ENCODE measurements at regions of chr3 and their contacts with region 1.

Region 1: GRCh38 chr3:120558771-120559241 is 37.3 kb upstream of the NDUFB4 start:
- DNase-seq: peak; percentile 88 to 94 (median 88)
- ATAC-seq: peak; percentile 37 to 60 (median 44)
- H3K4me3 ChIP-seq: peak overlapping the region; percentile 9 to 62 (median 52)
- H3K27ac ChIP-seq: peak overlapping the region; percentile 81 to 96 (median 91)
- H3K4me1 ChIP-seq: peaks cover 0 to 72% (median 49%) of the 10 kb centered on the region in 12 donors
- H3K27me3 ChIP-seq: no peaks in the 10 kb centered on the region
- CTCF ChIP-seq: peak; percentile 95 to 100 (median 99)
- POLR2A ChIP-seq: peak in 1 of 2 donors; percentile 33

Region 2: DNA sequence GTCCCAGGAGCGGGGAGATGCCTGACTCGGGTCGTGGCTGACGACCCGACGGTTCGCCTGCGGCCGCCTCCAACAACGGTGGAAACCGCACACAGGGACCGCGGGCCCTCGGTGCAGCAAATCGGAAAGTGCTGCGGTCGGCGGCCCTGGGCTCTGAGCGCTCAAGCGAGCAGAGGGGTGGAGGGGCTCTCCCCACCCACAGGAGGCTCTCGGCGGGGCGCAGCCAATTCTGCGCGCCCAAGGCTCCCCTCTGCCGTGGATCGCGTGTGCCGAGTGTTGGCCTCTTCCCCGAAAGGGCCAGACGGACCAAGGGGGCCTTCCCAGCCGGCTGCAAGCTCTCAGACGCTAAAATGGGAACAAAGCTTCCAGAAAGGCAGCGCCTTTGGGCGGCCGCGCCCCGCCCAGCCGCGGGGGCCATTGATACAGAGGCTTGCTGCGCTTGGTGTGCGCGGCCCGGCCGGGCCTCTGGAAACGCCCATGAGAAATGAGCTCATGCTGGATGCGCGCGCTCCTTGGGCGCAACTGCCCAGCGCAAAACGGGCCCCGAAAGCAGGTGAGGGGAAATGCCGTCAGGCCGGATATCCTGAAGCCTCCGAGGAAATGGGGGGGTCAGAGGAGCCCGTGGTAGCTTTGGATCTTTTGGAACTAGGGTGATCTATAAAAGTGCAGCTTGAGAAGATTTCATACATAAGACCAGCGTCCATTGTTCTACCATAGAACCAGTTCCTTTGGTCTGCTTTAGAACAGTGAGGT is 463.4 kb before region 1 on chr3:
- intact Hi-C with region 1: loop called in 1 of 10 experiments (anchors 10 kb)
- DNase-seq: peak; percentile 90 to 94 (median 93)
- ATAC-seq: peak; percentile 52 to 71 (median 68)
- H3K4me3 ChIP-seq: peak overlapping the region; percentile 53 to 96 (median 75)
- H3K27ac ChIP-seq: peak overlapping the region; percentile 95 to 100 (median 99)
- H3K4me1 ChIP-seq: peaks cover 9 to 31% (median 23%) of the 10 kb centered on the region in 12 donors
- H3K27me3 ChIP-seq: no peaks in the 10 kb centered on the region
- CTCF ChIP-seq: no peak
- POLR2A ChIP-seq: peak; percentile 64 to 90

Region 3: GRCh38 chr3:120348981-120349818 is 209.6 kb before region 1 on chr3 and contains the start of gene LRRC58:
- intact Hi-C with region 1: loop called in 3 of 10 experiments (anchors 2 to 10 kb)
- DNase-seq: peak; percentile 88 to 96 (median 92)
- ATAC-seq: peak; percentile 97 to 98 (median 97)
- H3K4me3 ChIP-seq: peak within 1 kb of the TSS; percentile 69 to 97 (median 84)
- H3K27ac ChIP-seq: peak within 1 kb of the TSS; percentile 80 to 94 (median 88)
- H3K4me1 ChIP-seq: peaks cover 0 to 41% (median 16%) of the 10 kb centered on the region in 12 donors
- H3K27me3 ChIP-seq: no peaks in the 10 kb centered on the region
- CTCF ChIP-seq: peak in 8 of 12 donors; percentile 10 to 54 (median 31)
- POLR2A ChIP-seq: peak; percentile 9 to 83
- total RNA-seq, gene LRRC58: 7.1 to 17.9 (median 10.5) TPM

Region 4: GRCh38 chr3:120450600-120451271 is 108.1 kb before region 1 on chr3 and contains the start of gene FSTL1:
- intact Hi-C with region 1: loop called in 3 of 10 experiments (anchors 2 to 10 kb)
- DNase-seq: peak; percentile 77 to 84 (median 82)
- ATAC-seq: peak; percentile 66 to 83 (median 78)
- H3K4me3 ChIP-seq: peak within 1 kb of the TSS; percentile 68 to 99 (median 90)
- H3K27ac ChIP-seq: peak within 1 kb of the TSS; percentile 91 to 98 (median 94)
- H3K4me1 ChIP-seq: peaks cover 0 to 45% (median 35%) of the 10 kb centered on the region in 12 donors
- H3K27me3 ChIP-seq: peaks cover 0 to 27% (median 0%) of the 10 kb centered on the region in 9 donors
- CTCF ChIP-seq: no peak
- POLR2A ChIP-seq: peak in 1 of 2 donors; percentile 83
- total RNA-seq, gene FSTL1: 138 to 667 (median 220) TPM

Region 5: DNA sequence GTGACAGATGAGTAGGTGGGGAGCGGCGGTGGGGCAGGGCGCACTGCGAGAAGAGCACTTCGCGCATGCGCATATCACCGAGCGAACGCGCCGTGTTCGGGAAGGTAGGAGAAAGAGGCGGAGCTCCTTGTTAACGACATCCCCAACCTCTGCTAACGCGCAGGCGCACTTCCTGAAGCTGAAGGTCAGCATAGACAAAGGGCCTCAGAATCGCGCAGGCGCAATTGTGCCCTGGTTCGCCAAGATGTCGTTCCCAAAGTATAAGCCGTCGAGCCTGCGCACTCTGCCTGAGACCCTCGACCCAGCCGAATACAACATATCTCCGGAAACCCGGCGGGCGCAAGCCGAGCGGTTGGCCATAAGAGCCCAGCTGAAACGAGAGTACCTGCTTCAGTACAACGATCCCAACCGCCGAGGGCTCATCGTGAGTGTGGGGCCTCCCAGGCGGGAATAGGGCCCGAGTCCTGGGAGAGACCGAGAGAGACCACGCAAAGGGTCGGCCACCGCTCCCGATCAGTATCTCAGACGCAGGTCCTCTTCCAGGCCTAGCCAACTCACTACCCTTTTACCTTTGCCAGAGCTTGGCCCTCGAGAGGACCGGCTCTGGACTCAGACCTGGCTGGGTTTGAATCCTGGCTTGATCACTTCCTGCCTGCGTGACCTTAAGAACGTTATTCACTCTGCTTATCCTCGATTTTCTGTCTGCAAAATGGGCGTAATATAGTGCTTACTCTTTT is 37.5 kb after region 1 on chr3 and contains the start of gene NDUFB4:
- intact Hi-C with region 1: loop called in 1 of 10 experiments (anchors 2 kb)
- DNase-seq: peak; percentile 97 to 99 (median 99)
- ATAC-seq: peak; percentile 99
- H3K4me3 ChIP-seq: peak within 1 kb of the TSS; percentile 61 to 94 (median 76)
- H3K27ac ChIP-seq: peak within 1 kb of the TSS; percentile 83 to 98 (median 94)
- H3K4me1 ChIP-seq: peaks cover 11 to 47% (median 34%) of the 10 kb centered on the region in 12 donors
- H3K27me3 ChIP-seq: no peaks in the 10 kb centered on the region
- CTCF ChIP-seq: no peak
- POLR2A ChIP-seq: peak; percentile 26 to 74
- total RNA-seq, gene NDUFB4: 283 to 596 (median 505) TPM

Measured in heart left ventricle (tissue), 16 donors.